Activated B cell treated with CpG ODN at 0.5 μM for 24 hours (primary cell): ENCODE measurements at regions of chr2 and their contacts with region 1.

Region 1: DNA sequence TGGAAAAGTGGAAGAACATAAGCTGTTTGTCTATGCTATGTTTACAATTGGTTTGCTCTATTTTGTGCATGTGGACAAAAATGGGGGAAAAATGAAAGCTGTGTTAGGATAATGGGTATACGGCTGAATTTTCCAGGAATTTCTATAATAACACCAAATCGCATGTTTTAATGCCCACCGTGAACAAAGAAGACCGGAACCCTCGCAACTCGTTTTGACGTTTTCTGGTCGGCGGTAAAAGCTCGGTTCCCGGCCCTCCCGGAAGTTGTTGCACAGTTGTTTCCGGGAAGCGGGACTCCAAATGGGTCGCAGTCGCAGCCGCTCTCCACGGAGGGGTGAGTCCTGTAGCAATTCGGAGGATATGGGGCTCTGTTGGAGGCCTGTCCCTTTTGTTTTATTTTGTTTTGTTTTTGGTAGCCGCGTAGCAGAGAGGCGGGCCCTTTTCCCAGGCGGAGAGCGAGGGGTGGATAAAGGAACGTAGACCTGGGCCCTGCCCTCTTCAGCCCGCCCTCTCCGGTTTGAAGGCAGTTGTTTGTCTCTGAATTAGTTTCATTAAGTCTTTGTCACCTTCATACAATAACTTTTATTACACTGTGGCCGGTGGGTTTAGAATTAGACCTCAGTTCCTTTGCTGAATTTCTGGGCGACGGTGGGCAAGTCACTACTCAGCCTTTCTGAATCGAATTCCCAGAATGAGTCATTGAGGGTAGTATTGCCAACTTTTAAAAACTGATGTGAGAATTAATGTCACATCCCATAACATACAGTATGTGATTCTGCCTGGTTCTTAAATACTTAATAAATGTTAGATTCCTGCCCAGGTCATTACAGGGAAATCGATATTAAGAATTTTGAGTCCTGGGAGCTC is at the start of gene SNRNP27:
- DNase-seq: peak; percentile 69
- ATAC-seq: peak; percentile 88
- H3K4me3 Mint-ChIP-seq: peak within 1 kb of the TSS; percentile 100
- H3K27ac Mint-ChIP-seq: peak within 1 kb of the TSS; percentile 98
- H3K4me1 Mint-ChIP-seq: peaks cover 43% of the 10 kb centered on the region
- H3K27me3 Mint-ChIP-seq: no peaks in the 10 kb centered on the region
- CTCF ChIP-seq: no peak
- total RNA-seq, gene SNRNP27: 43.0 and 49.1 TPM in 2 replicates

Region 2: GRCh38 chr2:69345434-69345833 is 548.5 kb before region 1 on chr2:
- CTCF ChIA-PET with region 1: no interaction called
- POLR2A ChIA-PET with region 1: no interaction called
- intact Hi-C with region 1: no loop called
- DNase-seq: no peak
- ATAC-seq: no peak
- H3K4me3 Mint-ChIP-seq: no peak overlapping the region
- H3K27ac Mint-ChIP-seq: no peak overlapping the region
- H3K4me1 Mint-ChIP-seq: no peaks in the 10 kb centered on the region
- H3K27me3 Mint-ChIP-seq: no peaks in the 10 kb centered on the region
- CTCF ChIP-seq: no peak

Region 3: DNA sequence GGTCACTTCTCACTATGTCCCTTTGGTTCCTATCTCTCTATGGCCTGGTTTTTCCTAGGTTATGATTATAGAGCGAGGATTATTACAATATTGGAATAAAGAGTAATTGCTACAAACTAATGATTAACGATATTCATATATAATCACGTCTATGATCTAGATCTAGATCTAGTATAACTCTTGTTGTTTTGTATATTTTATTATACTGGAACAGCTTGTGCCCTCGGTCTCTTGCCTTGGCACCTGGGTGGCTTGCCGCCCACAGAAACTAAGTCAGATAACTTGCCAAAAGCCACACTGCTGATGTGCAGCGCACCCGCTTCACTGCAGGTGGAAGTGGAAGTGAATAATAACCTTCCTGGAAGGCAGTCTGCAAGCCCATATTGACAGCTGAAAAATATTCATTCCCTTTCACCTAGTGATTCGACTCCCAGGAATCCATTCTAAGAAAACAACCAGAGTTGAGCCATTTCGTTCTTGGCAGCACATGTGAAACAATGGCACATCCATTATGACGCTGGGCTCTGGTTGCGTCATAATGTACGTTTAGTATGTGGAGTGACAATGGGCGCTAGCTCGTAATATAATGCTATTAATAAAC is 1083.8 kb after region 1 on chr2:
- CTCF ChIA-PET with region 1: no interaction called
- POLR2A ChIA-PET with region 1: no interaction called
- intact Hi-C with region 1: loop called (anchors 5 kb)
- DNase-seq: no peak
- ATAC-seq: peak; percentile 35
- H3K4me3 Mint-ChIP-seq: peak overlapping the region; percentile 92
- H3K27ac Mint-ChIP-seq: peak overlapping the region; percentile 87
- H3K4me1 Mint-ChIP-seq: peaks cover 16% of the 10 kb centered on the region
- H3K27me3 Mint-ChIP-seq: peaks cover 4% of the 10 kb centered on the region
- CTCF ChIP-seq: no peak

Region 4: DNA sequence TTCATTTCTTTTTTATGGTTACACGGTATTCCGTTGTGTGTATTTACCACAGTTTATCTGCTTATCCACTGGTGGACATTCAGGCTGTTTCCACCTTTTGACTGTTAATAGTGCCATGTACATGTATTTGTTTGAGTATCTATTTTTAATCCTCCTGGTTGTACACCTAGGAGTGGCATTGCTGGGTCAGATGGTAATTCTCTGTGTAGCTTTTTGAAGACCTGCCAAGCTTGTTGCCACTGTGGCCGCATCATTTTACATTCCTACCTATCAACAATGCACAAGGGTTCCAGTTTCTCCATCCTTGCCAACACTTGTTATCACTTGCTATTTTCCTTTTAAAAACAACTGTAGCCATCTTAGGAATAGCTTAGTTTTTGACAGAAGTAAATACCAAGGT is 1249.9 kb after region 1 on chr2:
- CTCF ChIA-PET with region 1: no interaction called
- POLR2A ChIA-PET with region 1: no interaction called
- intact Hi-C with region 1: no loop called
- DNase-seq: no peak
- ATAC-seq: no peak
- H3K4me3 Mint-ChIP-seq: no peak overlapping the region
- H3K27ac Mint-ChIP-seq: no peak overlapping the region
- H3K4me1 Mint-ChIP-seq: no peaks in the 10 kb centered on the region
- H3K27me3 Mint-ChIP-seq: no peaks in the 10 kb centered on the region
- CTCF ChIP-seq: no peak